Activated CD4-positive, alpha-beta T cell treated with anti-CD3 and anti-CD28 coated beads, Interleukin-2, amount 10 ng/mL, durations not matched to agents 7 days and 5 days (primary cell): ENCODE measurements at regions of chr17 and their contacts with region 1.

Region 1: GRCh38 chr17:45051060-45051719 is at the start of gene DCAKD:
- DNase-seq: peak; percentile 92
- H3K4me3 Mint-ChIP-seq: peak within 1 kb of the TSS; percentile 85
- H3K27ac Mint-ChIP-seq: peak within 1 kb of the TSS; percentile 97
- H3K4me1 Mint-ChIP-seq: peaks cover 54% of the 10 kb centered on the region
- H3K27me3 Mint-ChIP-seq: no peaks in the 10 kb centered on the region
- total RNA-seq, gene DCAKD: 36.5 to 38.6 TPM

Region 2: DNA sequence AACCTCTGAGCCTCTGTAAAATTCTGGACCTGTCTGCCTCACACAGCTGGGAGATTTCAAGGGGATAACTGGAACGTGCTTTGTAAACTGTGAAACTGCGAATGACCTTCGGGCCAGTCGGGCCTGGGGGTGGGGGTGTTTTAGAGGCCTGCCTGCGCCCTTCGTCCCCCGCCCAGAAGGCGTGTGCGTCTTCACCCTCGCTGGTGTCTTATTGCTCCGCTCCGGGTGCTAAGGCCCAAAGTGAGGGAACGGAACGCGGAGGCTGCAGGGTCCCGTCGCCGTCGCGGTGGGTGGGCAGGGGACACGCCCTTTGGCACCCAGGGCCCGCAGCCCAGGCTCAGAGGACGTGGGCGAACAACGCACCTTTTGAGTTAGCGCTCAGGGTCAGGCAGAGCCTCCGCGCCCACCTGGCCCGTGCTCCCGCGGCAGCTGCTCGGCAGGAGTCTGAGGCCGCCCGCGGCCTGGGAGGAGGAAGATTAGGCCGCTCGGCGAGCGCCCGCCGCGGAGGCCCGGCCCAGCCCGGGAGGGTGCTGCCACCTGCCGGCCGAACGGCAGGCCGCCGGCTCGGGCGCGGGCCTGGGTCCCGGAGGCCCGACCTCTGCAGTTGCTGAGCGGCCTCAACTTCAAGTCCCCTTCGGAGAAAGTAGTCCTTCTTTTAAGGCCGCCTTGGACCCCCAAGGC is 29.4 kb before region 1 on chr17:
- CTCF ChIA-PET with region 1: interaction called, 11 read pairs
- POLR2A ChIA-PET with region 1: no interaction called
- DNase-seq: peak; percentile 63
- H3K4me3 Mint-ChIP-seq: no peak overlapping the region
- H3K27ac Mint-ChIP-seq: no peak overlapping the region
- H3K4me1 Mint-ChIP-seq: peaks cover 21% of the 10 kb centered on the region
- H3K27me3 Mint-ChIP-seq: peaks cover 33% of the 10 kb centered on the region

Region 3: DNA sequence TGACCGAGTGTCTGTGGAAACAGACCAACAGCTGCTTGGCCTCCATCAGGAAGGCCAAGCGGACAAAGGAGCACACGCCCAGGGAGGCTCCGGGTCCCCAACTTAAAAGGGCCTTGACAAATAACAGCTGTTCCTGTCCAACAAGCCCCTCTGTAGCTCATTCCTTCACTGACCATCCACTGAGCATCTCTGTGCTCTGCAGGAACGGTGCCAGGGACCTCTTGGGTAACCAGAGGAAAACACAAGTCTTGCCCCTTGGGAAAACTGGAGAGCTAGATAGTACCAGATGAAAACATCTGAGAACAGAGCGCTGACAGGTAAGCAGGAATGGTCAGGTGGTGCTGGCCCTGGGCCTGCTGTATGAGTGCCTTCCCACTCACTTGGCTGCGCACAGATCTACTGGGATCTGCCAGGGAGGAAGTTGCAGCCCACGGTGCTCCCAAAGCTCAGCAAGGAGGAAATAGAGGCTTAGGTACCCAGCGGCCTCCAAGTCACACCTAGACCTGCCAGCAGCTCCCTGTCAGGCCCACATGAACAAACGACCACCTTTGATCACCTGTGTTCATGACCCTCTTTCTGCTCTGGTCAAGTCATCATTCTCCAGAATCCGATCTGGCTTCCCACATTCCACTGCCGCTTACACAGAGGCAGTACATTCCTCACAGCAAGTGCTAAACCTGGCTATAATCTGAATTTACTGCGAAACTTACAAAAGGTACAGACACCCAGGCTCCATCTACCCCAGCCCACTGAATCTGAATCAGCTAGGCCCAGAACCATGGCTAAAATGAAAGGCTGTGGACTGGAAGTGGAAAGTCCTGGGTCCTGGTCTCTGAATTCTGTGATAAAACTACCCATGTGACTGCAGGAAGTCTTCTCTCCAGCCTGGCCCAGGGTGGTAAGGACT is 12.2 kb before region 1 on chr17:
- CTCF ChIA-PET with region 1: interaction called, 10 read pairs
- POLR2A ChIA-PET with region 1: interaction called, 4 read pairs
- DNase-seq: no peak
- H3K4me3 Mint-ChIP-seq: no peak overlapping the region
- H3K27ac Mint-ChIP-seq: no peak overlapping the region
- H3K4me1 Mint-ChIP-seq: peaks cover 9% of the 10 kb centered on the region
- H3K27me3 Mint-ChIP-seq: no peaks in the 10 kb centered on the region